K562 (cell line): ENCODE measurements at regions of chr1 and their contacts with region 1.

Region 1: GRCh38 chr1:28581536-28582247 is 10.4 kb upstream of the RAB42 start:
- DNase-seq: peak; percentile 93 to 99 (median 96)
- ATAC-seq: peak; percentile 92
- H3K4me3 ChIP-seq: peak overlapping the region; percentile 81
- H3K27ac ChIP-seq: peak overlapping the region; percentile 81
- H3K4me1 ChIP-seq: peaks cover 18 to 24% of the 10 kb centered on the region in 2 experiments; a peak in 4 of 5 replicates
- H3K27me3 ChIP-seq: no peaks in the 10 kb centered on the region
- CTCF ChIP-seq: peak in 2 of 3 experiments; percentile 1 to 25; a peak in 2 of 6 replicates
- EP300 ChIP-seq: peak; percentile 67
- POLR2A ChIP-seq: peak; percentile 100
- RAD21 ChIP-seq: peak in 1 of 2 experiments; percentile 21; a peak in 2 of 4 replicates

Region 2: DNA sequence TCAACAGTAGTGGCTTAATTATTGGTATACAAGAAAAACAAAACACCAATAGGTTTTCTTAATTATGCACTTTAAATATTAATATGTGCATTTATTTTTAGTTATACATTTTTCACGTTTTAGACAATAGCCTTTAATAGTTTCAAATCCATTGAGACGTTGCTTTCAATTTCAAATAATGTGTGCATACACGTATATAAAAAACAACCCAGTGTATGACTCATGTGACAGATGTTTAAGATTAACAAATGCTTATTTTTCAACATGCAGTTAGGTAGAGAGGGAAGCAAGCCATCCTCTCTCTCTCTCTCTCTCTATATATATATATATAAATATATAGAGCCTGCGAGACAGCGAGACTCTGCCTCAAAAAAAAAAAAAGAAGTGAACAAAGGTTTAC is 517.6 kb before region 1 on chr1:
- CTCF ChIA-PET with region 1: no interaction called
- POLR2A ChIA-PET with region 1: no interaction called
- in situ Hi-C with region 1: no loop called
- intact Hi-C with region 1: no loop called
- DNase-seq: no peak
- ATAC-seq: no peak
- H3K4me3 ChIP-seq: no peak overlapping the region
- H3K27ac ChIP-seq: peak overlapping the region; percentile 73; the same call in 1 of the 3 replicates
- H3K4me1 ChIP-seq: peaks cover 14 to 29% of the 10 kb centered on the region in 2 experiments
- H3K27me3 ChIP-seq: no peaks in the 10 kb centered on the region
- CTCF ChIP-seq: no peak
- EP300 ChIP-seq: no peak
- POLR2A ChIP-seq: no peak
- RAD21 ChIP-seq: no peak

Region 3: DNA sequence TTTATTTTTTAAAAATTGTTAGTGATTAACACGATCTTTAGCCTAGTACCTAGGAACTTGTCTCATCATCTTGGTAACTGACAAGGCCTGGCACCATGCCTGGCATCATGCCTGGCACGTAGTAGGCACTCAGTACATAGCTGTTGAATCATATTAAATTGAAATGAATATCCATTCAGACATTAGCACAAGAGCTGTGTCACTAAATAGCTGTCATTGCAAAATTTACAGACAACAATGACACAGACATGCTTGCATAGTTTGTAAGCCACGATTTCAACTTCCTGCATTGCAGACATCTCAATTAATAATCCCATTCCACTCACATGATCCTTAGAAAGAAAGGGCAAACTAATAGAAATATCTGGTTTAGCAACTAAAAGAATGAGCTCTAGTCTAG is 227.6 kb before region 1 on chr1:
- CTCF ChIA-PET with region 1: no interaction called
- POLR2A ChIA-PET with region 1: interaction called, 15 read pairs
- in situ Hi-C with region 1: no loop called
- intact Hi-C with region 1: no loop called
- DNase-seq: no peak
- ATAC-seq: no peak
- H3K4me3 ChIP-seq: no peak overlapping the region
- H3K27ac ChIP-seq: no peak overlapping the region
- H3K4me1 ChIP-seq: peaks cover 21 to 34% of the 10 kb centered on the region in 2 experiments
- H3K27me3 ChIP-seq: no peaks in the 10 kb centered on the region
- CTCF ChIP-seq: no peak
- EP300 ChIP-seq: no peak
- POLR2A ChIP-seq: no peak
- RAD21 ChIP-seq: no peak

Region 4: DNA sequence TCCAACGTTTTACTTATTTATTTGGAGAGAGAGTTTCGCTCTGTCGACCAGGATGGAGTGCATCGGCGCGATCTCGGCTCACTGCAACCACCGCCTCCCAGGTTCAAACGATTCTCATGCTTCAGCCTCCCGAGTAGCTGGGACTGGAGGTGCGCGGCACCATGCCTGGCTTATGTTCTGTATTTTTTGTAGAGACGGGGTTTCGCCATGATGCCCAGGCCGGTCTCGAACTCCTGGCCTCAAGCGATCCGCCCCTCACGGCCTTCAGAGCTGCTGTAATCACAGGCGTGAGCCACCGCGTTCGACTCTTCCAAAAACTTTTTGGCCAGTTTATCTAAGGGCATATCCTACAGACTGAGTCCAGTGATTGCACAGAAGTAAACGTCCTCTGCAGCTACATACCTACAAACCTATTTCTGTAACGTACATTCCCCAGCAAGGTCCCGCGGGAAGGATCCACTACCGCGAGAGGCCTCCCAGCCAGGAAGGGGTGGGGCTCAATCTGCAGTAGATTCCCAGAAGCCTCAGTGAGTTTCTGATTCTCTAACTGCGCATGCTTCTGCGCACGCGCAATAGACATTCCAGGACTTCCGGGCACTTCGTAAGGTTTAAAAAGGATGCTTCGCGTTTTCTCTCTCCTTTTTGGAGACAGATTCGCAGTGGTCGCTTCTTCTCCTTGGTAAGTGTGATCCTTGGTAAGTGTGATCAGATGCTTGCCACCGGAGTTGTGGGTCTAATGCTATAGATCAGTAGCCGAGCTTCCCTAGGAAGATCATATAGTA is 76.1 kb before region 1 on chr1 and contains the start of gene RCC1:
- CTCF ChIA-PET with region 1: no interaction called
- POLR2A ChIA-PET with region 1: interaction called, 201 read pairs
- in situ Hi-C with region 1: no loop called
- intact Hi-C with region 1: no loop called
- DNase-seq: peak; percentile 95 to 99 (median 96)
- ATAC-seq: peak; percentile 81
- H3K4me3 ChIP-seq: peak within 1 kb of the TSS; percentile 87
- H3K27ac ChIP-seq: peak within 1 kb of the TSS; percentile 94
- H3K4me1 ChIP-seq: peaks cover 11 to 29% of the 10 kb centered on the region in 2 experiments; a peak in 4 of 5 replicates
- H3K27me3 ChIP-seq: no peaks in the 10 kb centered on the region
- CTCF ChIP-seq: no peak
- EP300 ChIP-seq: no peak; the same call in 1 of the 2 replicates
- POLR2A ChIP-seq: peak; percentile 100
- RAD21 ChIP-seq: 0 out of 4 replicates have a peak, but pooled peaks of 1 of the 2 experiments have one; percentile 10
- polyA plus RNA-seq, gene RCC1: 16.4 to 28.1 TPM

Region 5: GRCh38 chr1:28552758-28553663 is 28.7 kb before region 1 on chr1 and contains the start of gene TRNAU1AP:
- CTCF ChIA-PET with region 1: no interaction called
- POLR2A ChIA-PET with region 1: interaction called, 157 read pairs
- in situ Hi-C with region 1: no loop called
- intact Hi-C with region 1: no loop called
- DNase-seq: peak; percentile 98 to 99 (median 98)
- ATAC-seq: peak; percentile 98
- H3K4me3 ChIP-seq: peak within 1 kb of the TSS; percentile 57
- H3K27ac ChIP-seq: peak within 1 kb of the TSS; percentile 82
- H3K4me1 ChIP-seq: peaks cover 9 to 20% of the 10 kb centered on the region in 2 experiments; a peak in 4 of 5 replicates
- H3K27me3 ChIP-seq: no peaks in the 10 kb centered on the region
- CTCF ChIP-seq: 0 out of 6 replicates have a peak, but pooled peaks of 1 of the 3 experiments have one; percentile 0
- EP300 ChIP-seq: peak; percentile 47
- POLR2A ChIP-seq: peak; percentile 85
- RAD21 ChIP-seq: no peak
- polyA plus RNA-seq, gene TRNAU1AP: 99.0 to 110 TPM

Region 6: GRCh38 chr1:28613175-28613574 is 31.5 kb after region 1 on chr1:
- CTCF ChIA-PET with region 1: no interaction called
- POLR2A ChIA-PET with region 1: interaction called, 14 read pairs
- in situ Hi-C with region 1: no loop called
- intact Hi-C with region 1: no loop called
- DNase-seq: no peak
- ATAC-seq: no peak
- H3K4me3 ChIP-seq: no peak overlapping the region
- H3K27ac ChIP-seq: no peak overlapping the region
- H3K4me1 ChIP-seq: no peaks in the 10 kb centered on the region
- H3K27me3 ChIP-seq: no peaks in the 10 kb centered on the region
- CTCF ChIP-seq: no peak
- EP300 ChIP-seq: no peak
- POLR2A ChIP-seq: no peak
- RAD21 ChIP-seq: no peak

Region 7: GRCh38 chr1:28877132-28877781 is 295.6 kb after region 1 on chr1:
- CTCF ChIA-PET with region 1: no interaction called
- POLR2A ChIA-PET with region 1: interaction called, 18 read pairs
- in situ Hi-C with region 1: no loop called
- intact Hi-C with region 1: no loop called
- DNase-seq: peak; percentile 81 to 92 (median 82)
- ATAC-seq: peak; percentile 85
- H3K4me3 ChIP-seq: no peak overlapping the region
- H3K27ac ChIP-seq: no peak overlapping the region
- H3K4me1 ChIP-seq: peaks cover 21 to 22% of the 10 kb centered on the region in 2 experiments
- H3K27me3 ChIP-seq: no peaks in the 10 kb centered on the region
- CTCF ChIP-seq: peak; percentile 94 to 99 (median 97)
- EP300 ChIP-seq: no peak
- POLR2A ChIP-seq: no peak
- RAD21 ChIP-seq: peak; percentile 95 to 98

Region 8: DNA sequence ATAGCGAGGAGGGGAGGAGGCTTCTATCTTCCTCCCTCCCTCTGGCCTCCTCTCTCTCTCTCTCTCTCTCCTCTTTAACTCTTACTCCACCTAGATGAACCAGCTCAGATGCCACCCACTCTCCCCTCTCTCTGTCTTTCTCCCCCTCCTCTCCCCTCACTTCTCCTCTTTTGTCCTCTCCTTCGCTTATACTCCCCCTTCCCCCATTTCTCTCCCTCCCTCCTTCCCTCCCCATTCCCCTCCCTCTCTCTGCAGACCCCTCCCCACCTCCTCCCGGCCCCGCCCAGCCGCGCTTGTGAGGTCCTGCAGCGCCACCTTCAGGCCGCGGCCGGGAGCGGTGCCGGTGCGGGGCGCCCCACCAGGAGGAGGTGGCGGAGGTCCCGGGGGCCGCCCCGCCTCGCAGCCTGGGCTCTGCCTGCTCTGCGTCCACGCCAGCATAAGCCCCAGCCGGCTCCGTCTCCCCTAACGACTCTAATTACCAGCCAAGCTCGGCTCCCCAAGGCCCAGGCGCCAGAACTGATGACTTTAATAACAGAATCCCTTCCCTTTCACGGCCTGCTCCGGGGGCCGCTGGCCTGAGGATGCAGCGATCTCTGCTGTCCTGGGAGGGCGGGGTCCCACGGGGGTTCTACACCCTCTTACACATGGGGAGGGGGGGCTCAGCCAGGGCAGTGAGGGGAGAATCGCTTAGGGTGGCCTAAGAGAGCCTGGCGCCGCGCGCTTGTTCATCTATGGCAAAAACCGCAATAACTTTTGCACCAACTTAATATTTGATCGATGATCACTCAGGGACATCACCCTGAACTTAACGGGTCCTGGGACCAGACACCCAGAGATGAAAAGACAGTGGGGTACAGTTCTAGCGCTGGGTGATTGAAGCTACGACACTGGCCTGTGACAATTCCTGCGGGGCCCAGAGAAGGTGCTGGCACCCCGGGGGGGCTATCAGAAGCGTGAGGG is 1504.4 kb after region 1 on chr1:
- CTCF ChIA-PET with region 1: no interaction called
- POLR2A ChIA-PET with region 1: no interaction called
- in situ Hi-C with region 1: no loop called
- intact Hi-C with region 1: no loop called
- DNase-seq: peak; percentile 66 to 85 (median 80)
- ATAC-seq: peak; percentile 94
- H3K4me3 ChIP-seq: no peak overlapping the region
- H3K27ac ChIP-seq: no peak overlapping the region
- H3K4me1 ChIP-seq: peaks cover 0 to 5% of the 10 kb centered on the region in 2 experiments; a peak in 2 of 5 replicates
- H3K27me3 ChIP-seq: peaks cover 2 to 19% of the 10 kb centered on the region in 2 experiments; a peak in 3 of 5 replicates
- CTCF ChIP-seq: peak; percentile 62 to 93 (median 75); a peak in 5 of 6 replicates
- EP300 ChIP-seq: no peak
- POLR2A ChIP-seq: no peak
- RAD21 ChIP-seq: peak; percentile 51 to 63